WTC11 (cell line): ENCODE measurements at regions of chr1 and their contacts with region 1.

Region 1: GRCh38 chr1:110524311-110525251 is 5.6 kb upstream of the KCNA10 start:
- DNase-seq: peak; percentile 81
- ATAC-seq: peak; percentile 96
- H3K4me3 Mint-ChIP-seq: no peak overlapping the region
- H3K27ac Mint-ChIP-seq: no peak overlapping the region
- H3K4me1 Mint-ChIP-seq: no peaks in the 10 kb centered on the region
- H3K27me3 Mint-ChIP-seq: peaks cover 4% of the 10 kb centered on the region
- CTCF ChIP-seq: peak; percentile 88

Region 2: GRCh38 chr1:110293601-110294104 is 230.9 kb before region 1 on chr1:
- CTCF ChIA-PET with region 1: no interaction called
- POLR2A ChIA-PET with region 1: no interaction called
- DNase-seq: no peak
- ATAC-seq: no peak
- H3K4me3 Mint-ChIP-seq: no peak overlapping the region
- H3K27ac Mint-ChIP-seq: no peak overlapping the region
- H3K4me1 Mint-ChIP-seq: peaks cover 12% of the 10 kb centered on the region
- H3K27me3 Mint-ChIP-seq: no peaks in the 10 kb centered on the region; the same call in 1 of the 2 replicates
- CTCF ChIP-seq: no peak

Region 3: DNA sequence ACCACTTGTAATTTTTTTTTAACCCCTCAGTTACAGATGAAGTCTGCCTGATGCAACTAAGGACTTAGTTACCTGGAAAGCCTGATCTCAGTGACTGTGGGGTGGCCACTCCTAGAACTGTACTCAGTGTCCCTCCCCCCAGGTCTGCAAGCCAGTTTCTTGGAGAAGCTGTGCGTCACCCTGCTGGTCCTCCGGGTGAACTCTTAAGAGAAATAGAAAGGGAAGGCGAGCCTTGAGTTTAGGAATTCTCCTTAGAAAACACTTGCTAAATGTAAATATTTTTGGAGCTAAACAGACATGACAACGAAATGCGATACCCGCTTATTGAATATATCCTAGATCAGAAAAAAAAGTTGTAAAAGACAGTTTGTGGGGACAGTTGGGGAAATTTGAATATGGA is 134.5 kb before region 1 on chr1:
- CTCF ChIA-PET with region 1: no interaction called
- POLR2A ChIA-PET with region 1: no interaction called
- DNase-seq: peak; percentile 16
- ATAC-seq: peak; percentile 48
- H3K4me3 Mint-ChIP-seq: no peak overlapping the region
- H3K27ac Mint-ChIP-seq: peak overlapping the region; percentile 75
- H3K4me1 Mint-ChIP-seq: peaks cover 18% of the 10 kb centered on the region
- H3K27me3 Mint-ChIP-seq: no peaks in the 10 kb centered on the region
- CTCF ChIP-seq: no peak

Region 4: DNA sequence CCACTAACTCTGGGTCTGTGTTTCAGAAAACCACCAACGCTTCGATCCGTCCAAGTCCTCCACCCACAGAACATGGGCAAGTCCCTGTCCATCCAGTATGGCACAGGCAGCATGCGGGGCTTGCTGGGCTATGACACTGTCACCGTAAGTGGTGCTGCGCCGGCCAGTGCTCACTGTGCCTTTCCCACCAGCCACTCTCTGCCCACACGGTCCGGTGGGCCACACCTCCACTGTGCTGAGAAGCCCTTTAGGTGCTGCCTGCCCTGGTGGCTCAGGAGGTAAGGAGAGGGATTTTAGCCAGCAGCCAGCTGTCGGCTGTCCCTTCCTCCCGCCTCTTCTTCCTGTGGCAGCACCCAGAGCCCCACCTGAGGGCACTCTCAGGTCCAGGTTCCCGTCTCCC is 39.8 kb before region 1 on chr1:
- CTCF ChIA-PET with region 1: no interaction called
- POLR2A ChIA-PET with region 1: no interaction called
- DNase-seq: no peak
- ATAC-seq: no peak
- H3K4me3 Mint-ChIP-seq: no peak overlapping the region
- H3K27ac Mint-ChIP-seq: no peak overlapping the region
- H3K4me1 Mint-ChIP-seq: peaks cover 21% of the 10 kb centered on the region
- H3K27me3 Mint-ChIP-seq: no peaks in the 10 kb centered on the region; the same call in 1 of the 2 replicates
- CTCF ChIP-seq: no peak

Region 5: DNA sequence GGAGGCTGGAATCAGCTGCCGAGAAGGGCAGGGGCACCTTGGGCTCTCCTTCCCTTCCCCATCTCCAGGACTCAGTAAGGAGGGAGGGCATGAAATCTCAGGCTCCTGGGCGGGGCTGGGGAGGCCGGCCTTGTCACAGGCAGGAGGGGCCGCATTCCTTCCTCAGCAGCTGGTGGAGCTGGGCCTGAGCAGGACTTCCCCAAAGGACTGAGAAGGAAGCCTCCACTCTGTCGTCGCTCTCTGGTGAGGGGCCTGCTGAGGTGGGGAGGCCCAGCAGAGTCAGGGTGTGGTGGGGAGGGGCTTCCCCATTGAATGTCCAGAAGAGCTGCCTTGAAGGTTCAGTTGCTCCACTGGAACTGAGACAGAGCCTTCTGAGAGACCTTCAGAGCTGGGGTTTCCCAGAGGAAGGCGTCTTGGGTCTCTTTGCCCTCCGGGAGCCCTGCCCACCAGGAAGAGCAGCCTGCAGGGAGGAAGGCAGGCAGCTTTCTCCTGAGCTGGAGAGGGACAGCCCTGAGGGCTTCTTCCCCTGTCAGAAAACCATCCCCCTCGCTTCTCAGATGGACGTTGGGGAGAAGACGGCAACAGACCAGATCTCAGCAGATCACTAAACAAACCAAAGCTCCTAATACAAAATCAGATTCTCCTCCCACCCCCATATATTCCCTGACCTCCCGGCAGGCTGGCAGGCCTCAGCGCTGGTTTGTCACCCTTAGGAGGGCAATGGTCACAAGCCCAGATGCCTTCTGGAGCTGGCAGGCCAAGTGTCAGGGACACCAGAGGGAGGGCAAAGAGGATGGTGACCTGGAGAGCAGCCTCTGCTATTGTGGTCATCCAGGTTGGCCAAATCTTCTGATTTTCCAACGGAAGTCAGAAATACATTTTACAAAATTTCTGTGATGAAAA is 16.3 kb before region 1 on chr1:
- CTCF ChIA-PET with region 1: interaction called, 17 read pairs
- POLR2A ChIA-PET with region 1: no interaction called
- DNase-seq: peak; percentile 64
- ATAC-seq: peak; percentile 96
- H3K4me3 Mint-ChIP-seq: no peak overlapping the region
- H3K27ac Mint-ChIP-seq: no peak overlapping the region
- H3K4me1 Mint-ChIP-seq: peaks cover 13% of the 10 kb centered on the region
- H3K27me3 Mint-ChIP-seq: no peaks in the 10 kb centered on the region; the same call in none of the 2 replicates
- CTCF ChIP-seq: no peak

Region 6: GRCh38 chr1:110513511-110513910 is 11.1 kb before region 1 on chr1:
- CTCF ChIA-PET with region 1: interaction called, 17 read pairs
- POLR2A ChIA-PET with region 1: no interaction called
- DNase-seq: no peak
- ATAC-seq: peak; percentile 91
- H3K4me3 Mint-ChIP-seq: no peak overlapping the region
- H3K27ac Mint-ChIP-seq: no peak overlapping the region; the same call in 1 of the 2 replicates
- H3K4me1 Mint-ChIP-seq: peaks cover 22% of the 10 kb centered on the region
- H3K27me3 Mint-ChIP-seq: peaks cover 3% of the 10 kb centered on the region; the same call in 1 of the 2 replicates
- CTCF ChIP-seq: no peak

Region 7: GRCh38 chr1:110605901-110606656 is 81.5 kb after region 1 on chr1 and contains the start of gene KCNA2:
- CTCF ChIA-PET with region 1: interaction called, 33 read pairs
- POLR2A ChIA-PET with region 1: no interaction called
- DNase-seq: peak; percentile 68
- ATAC-seq: peak; percentile 71
- H3K4me3 Mint-ChIP-seq: peak within 1 kb of the TSS; percentile 79
- H3K27ac Mint-ChIP-seq: no peak within 1 kb of the TSS
- H3K4me1 Mint-ChIP-seq: peaks cover 15% of the 10 kb centered on the region
- H3K27me3 Mint-ChIP-seq: peaks cover 79% of the 10 kb centered on the region
- CTCF ChIP-seq: no peak
- total RNA-seq, gene KCNA2: 0.41 to 0.87 TPM (median 0.50 TPM) in 3 replicates